Activated T-helper 1 cell treated with anti-CD3 and anti-CD28 coated beads, Interleukin-12 subunit alpha, Interleukin-12 subunit beta, Interleukin-2, Interleukin-4 antibody, amounts not matched to agents 30 ng/mL and 10 ng/mL and 1 ng/mL, durations not matched to agents 14 hours and 24 hours and 36 hours (primary cell): ENCODE measurements at regions of chr12 and their contacts with region 1.

Region 1: GRCh38 chr12:98725476-98726247 is 80.6 kb downstream of the APAF1 start:
- DNase-seq: peak; percentile 29
- H3K4me3 Mint-ChIP-seq: no peak overlapping the region
- H3K27ac Mint-ChIP-seq: peak overlapping the region; percentile 16
- H3K4me1 Mint-ChIP-seq: peaks cover 14% of the 10 kb centered on the region
- H3K27me3 Mint-ChIP-seq: no peaks in the 10 kb centered on the region

Region 2: GRCh38 chr12:98698603-98699463 is 26.8 kb before region 1 on chr12:
- intact Hi-C with region 1: loop called (anchors 2 kb)
- DNase-seq: peak; percentile 26
- H3K4me3 Mint-ChIP-seq: no peak overlapping the region
- H3K27ac Mint-ChIP-seq: no peak overlapping the region
- H3K4me1 Mint-ChIP-seq: peaks cover 21% of the 10 kb centered on the region
- H3K27me3 Mint-ChIP-seq: no peaks in the 10 kb centered on the region

Region 3: DNA sequence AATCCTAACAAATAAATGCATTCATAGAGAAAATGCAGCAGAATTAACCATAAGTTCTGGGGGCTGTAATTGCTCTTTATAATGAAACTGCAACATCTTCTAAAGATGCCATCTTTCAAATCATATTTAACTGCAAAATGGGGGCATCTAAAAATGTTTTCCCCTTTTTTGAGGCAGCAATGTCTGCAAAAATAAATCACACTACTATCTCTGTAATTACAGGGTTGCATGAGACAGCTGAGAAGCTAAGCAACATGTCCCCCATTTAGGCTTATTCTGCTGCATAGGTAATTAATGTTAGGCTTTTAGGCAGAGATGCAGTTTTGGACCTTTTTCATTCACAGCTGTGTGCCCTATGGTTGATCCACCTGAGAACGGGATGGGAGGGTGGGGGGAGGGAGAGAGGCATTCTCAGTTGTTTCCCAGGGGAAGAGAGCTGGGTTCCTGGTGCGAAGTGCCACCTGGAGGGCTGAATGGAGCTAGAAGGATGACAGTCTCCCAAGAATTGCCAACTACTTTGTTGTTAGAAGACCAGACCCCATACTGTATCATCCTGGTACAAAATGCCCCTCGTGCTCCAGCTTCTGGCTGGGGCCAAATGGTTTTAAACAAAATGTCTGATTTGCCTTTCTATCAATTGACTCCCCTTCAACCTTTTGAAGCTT is 73.6 kb after region 1 on chr12:
- intact Hi-C with region 1: loop called (anchors 1 kb)
- DNase-seq: no peak
- H3K4me3 Mint-ChIP-seq: no peak overlapping the region
- H3K27ac Mint-ChIP-seq: no peak overlapping the region
- H3K4me1 Mint-ChIP-seq: no peaks in the 10 kb centered on the region
- H3K27me3 Mint-ChIP-seq: peaks cover 23% of the 10 kb centered on the region

Region 4: DNA sequence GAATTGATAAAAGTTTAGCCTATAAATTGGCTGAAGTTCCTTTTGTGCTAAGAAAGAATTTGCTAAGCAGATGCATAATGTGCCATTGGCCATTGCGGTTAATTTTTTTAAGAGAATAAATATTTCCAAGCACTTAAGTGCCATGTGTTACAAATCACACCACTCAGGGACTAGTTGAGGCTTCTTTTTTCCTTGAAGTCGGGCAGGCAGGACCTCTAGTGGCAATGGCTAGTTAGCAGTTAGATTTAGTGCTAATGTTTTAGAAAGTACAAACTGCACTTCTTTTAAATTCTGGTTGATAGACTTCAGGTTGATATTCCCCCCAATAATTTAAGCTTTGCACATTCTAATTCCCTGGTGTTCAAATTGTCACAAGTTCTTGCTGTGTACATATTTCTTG is 213.7 kb after region 1 on chr12:
- intact Hi-C with region 1: loop called (anchors 1 kb)
- DNase-seq: no peak
- H3K4me3 Mint-ChIP-seq: no peak overlapping the region
- H3K27ac Mint-ChIP-seq: no peak overlapping the region
- H3K4me1 Mint-ChIP-seq: no peaks in the 10 kb centered on the region
- H3K27me3 Mint-ChIP-seq: peaks cover 12% of the 10 kb centered on the region

Region 5: GRCh38 chr12:99436584-99436983 is 710.9 kb after region 1 on chr12:
- intact Hi-C with region 1: no loop called
- DNase-seq: no peak
- H3K4me3 Mint-ChIP-seq: no peak overlapping the region
- H3K27ac Mint-ChIP-seq: no peak overlapping the region
- H3K4me1 Mint-ChIP-seq: no peaks in the 10 kb centered on the region
- H3K27me3 Mint-ChIP-seq: no peaks in the 10 kb centered on the region